Naive thymus-derived CD4-positive, alpha-beta T cell (primary cell): ENCODE measurements at regions of chr10 and their contacts with region 1.

Region 1: GRCh38 chr10:62244780-62245467 is 23.7 kb downstream of the RTKN2 start:
- DNase-seq: peak in 8 of 9 donors; percentile 35 to 80 (median 68)
- ATAC-seq: peak; percentile 94
- H3K4me3 ChIP-seq: no peak overlapping the region
- H3K4me3 Mint-ChIP-seq: peak overlapping the region in 6 of 10 donors; percentile 16 to 64 (median 42)
- H3K27ac ChIP-seq: no peak overlapping the region
- H3K27ac Mint-ChIP-seq: peak overlapping the region in 8 of 9 donors; percentile 6 to 85 (median 53)
- H3K4me1 ChIP-seq: peaks cover 6 to 9% of the 10 kb centered on the region in 2 donors
- H3K4me1 Mint-ChIP-seq: peaks cover 9 to 37% (median 30%) of the 10 kb centered on the region in 7 donors
- H3K27me3 ChIP-seq: no peaks in the 10 kb centered on the region
- H3K27me3 Mint-ChIP-seq: no peaks in the 10 kb centered on the region

Region 2: DNA sequence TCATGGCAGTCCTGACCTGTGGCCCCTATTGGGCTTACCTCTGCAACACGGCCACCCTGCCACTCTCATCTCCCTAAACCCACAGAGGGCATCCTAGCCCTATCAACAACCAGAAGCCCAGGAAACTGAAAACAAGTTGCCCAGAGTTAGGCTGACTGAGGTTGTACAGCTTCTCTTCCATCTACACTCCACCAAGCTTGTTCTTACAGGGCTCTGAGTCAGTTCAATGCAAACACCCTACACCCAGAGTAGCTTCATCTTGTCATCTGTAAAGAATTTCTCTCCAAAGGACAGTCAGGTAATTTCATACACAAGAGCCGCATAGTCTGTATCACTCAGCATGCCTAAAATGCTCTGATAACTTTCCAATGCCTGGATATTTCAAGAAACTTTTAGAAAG is 168.0 kb before region 1 on chr10:
- CTCF ChIA-PET with region 1: interaction called, 8 read pairs
- POLR2A ChIA-PET with region 1: no interaction called
- intact Hi-C with region 1: loop called (anchors 1 to 10 kb)
- DNase-seq: peak in 3 of 9 donors; percentile 12 to 27 (median 16)
- ATAC-seq: peak; percentile 27
- H3K4me3 ChIP-seq: no peak overlapping the region
- H3K4me3 Mint-ChIP-seq: peak overlapping the region in 8 of 10 donors; percentile 7 to 55 (median 30)
- H3K27ac ChIP-seq: peak overlapping the region; percentile 20
- H3K27ac Mint-ChIP-seq: peak overlapping the region; percentile 27 to 86 (median 79)
- H3K4me1 ChIP-seq: peaks cover 13 to 17% of the 10 kb centered on the region in 2 donors
- H3K4me1 Mint-ChIP-seq: peaks cover 29 to 83% (median 73%) of the 10 kb centered on the region in 7 donors
- H3K27me3 ChIP-seq: no peaks in the 10 kb centered on the region
- H3K27me3 Mint-ChIP-seq: no peaks in the 10 kb centered on the region

Region 3: GRCh38 chr10:62082729-62083411 is 162.1 kb before region 1 on chr10:
- CTCF ChIA-PET with region 1: interaction called, 7 read pairs
- POLR2A ChIA-PET with region 1: no interaction called
- intact Hi-C with region 1: loop called (anchors 1 to 10 kb)
- DNase-seq: peak in 7 of 9 donors; percentile 23 to 70 (median 53)
- ATAC-seq: peak; percentile 83
- H3K4me3 ChIP-seq: peak overlapping the region; percentile 35
- H3K4me3 Mint-ChIP-seq: peak overlapping the region; percentile 46 to 79 (median 72)
- H3K27ac ChIP-seq: peak overlapping the region; percentile 63
- H3K27ac Mint-ChIP-seq: peak overlapping the region; percentile 69 to 92 (median 87)
- H3K4me1 ChIP-seq: peaks cover 23 to 41% of the 10 kb centered on the region in 2 donors
- H3K4me1 Mint-ChIP-seq: peaks cover 28 to 72% (median 58%) of the 10 kb centered on the region in 7 donors
- H3K27me3 ChIP-seq: no peaks in the 10 kb centered on the region
- H3K27me3 Mint-ChIP-seq: no peaks in the 10 kb centered on the region

Region 4: DNA sequence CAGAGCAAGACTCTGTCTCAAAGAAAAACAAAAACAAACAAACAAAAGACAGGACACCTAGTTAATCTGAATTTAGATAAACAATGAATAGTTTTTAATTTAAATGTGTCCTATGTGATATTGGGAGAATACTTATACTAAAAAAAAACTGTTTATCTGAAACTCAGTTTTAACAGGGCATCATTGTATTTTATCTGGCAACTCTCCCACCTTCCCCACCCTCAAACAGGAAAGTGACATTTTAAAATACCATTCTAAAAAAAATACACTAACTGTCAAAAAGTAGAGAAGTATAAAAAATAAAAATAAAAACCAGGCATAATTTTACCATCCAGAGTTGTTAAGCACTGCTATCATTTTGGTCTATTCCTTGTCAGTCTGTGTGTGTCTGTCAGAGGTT is 95.3 kb before region 1 on chr10:
- CTCF ChIA-PET with region 1: interaction called, 12 read pairs
- POLR2A ChIA-PET with region 1: no interaction called
- intact Hi-C with region 1: loop called in 1 of 2 experiments (anchors 1 kb)
- DNase-seq: no peak
- ATAC-seq: no peak
- H3K4me3 ChIP-seq: no peak overlapping the region
- H3K4me3 Mint-ChIP-seq: no peak overlapping the region
- H3K27ac ChIP-seq: no peak overlapping the region
- H3K27ac Mint-ChIP-seq: peak overlapping the region in 1 of 9 donors; percentile 18
- H3K4me1 ChIP-seq: peaks cover 0 to 4% of the 10 kb centered on the region in 2 donors
- H3K4me1 Mint-ChIP-seq: peaks cover 5 to 20% (median 15%) of the 10 kb centered on the region in 7 donors
- H3K27me3 ChIP-seq: no peaks in the 10 kb centered on the region
- H3K27me3 Mint-ChIP-seq: no peaks in the 10 kb centered on the region

Region 5: GRCh38 chr10:62233494-62234283 is 11.2 kb before region 1 on chr10:
- CTCF ChIA-PET with region 1: interaction called, 13 read pairs
- POLR2A ChIA-PET with region 1: interaction called, 3 read pairs
- intact Hi-C with region 1: no loop called
- DNase-seq: peak in 2 of 9 donors; percentile 3 to 23
- ATAC-seq: no peak
- H3K4me3 ChIP-seq: no peak overlapping the region
- H3K4me3 Mint-ChIP-seq: peak overlapping the region in 9 of 10 donors; percentile 13 to 78 (median 56)
- H3K27ac ChIP-seq: no peak overlapping the region
- H3K27ac Mint-ChIP-seq: peak overlapping the region in 7 of 9 donors; percentile 17 to 89 (median 76)
- H3K4me1 ChIP-seq: peaks cover 0 to 13% of the 10 kb centered on the region in 2 donors
- H3K4me1 Mint-ChIP-seq: peaks cover 7 to 51% (median 37%) of the 10 kb centered on the region in 7 donors
- H3K27me3 ChIP-seq: no peaks in the 10 kb centered on the region
- H3K27me3 Mint-ChIP-seq: no peaks in the 10 kb centered on the region

Region 6: GRCh38 chr10:62443866-62444265 is 198.9 kb after region 1 on chr10:
- CTCF ChIA-PET with region 1: no interaction called
- POLR2A ChIA-PET with region 1: no interaction called
- intact Hi-C with region 1: no loop called
- DNase-seq: no peak
- ATAC-seq: no peak
- H3K4me3 ChIP-seq: no peak overlapping the region
- H3K4me3 Mint-ChIP-seq: no peak overlapping the region
- H3K27ac ChIP-seq: no peak overlapping the region
- H3K27ac Mint-ChIP-seq: no peak overlapping the region
- H3K4me1 ChIP-seq: no peaks in the 10 kb centered on the region
- H3K4me1 Mint-ChIP-seq: peaks cover 0 to 3% (median 0%) of the 10 kb centered on the region in 7 donors
- H3K27me3 ChIP-seq: no peaks in the 10 kb centered on the region
- H3K27me3 Mint-ChIP-seq: peaks cover 3 to 24% (median 11%) of the 10 kb centered on the region in 5 donors